ENCODE measurements at regions of chr10 and their contacts with region 1.

Region 1: GRCh38 chr10:48577158-48577557 is 27.7 kb downstream of the ARHGAP22 start:
- DNase-seq: no peak
- ATAC-seq: peak; percentile 65
- H3K4me3 Mint-ChIP-seq: peak overlapping the region; percentile 41
- H3K27ac Mint-ChIP-seq: peak overlapping the region; percentile 82
- H3K4me1 Mint-ChIP-seq: peaks cover 92% of the 10 kb centered on the region
- H3K27me3 Mint-ChIP-seq: no peaks in the 10 kb centered on the region
- CTCF ChIP-seq: no peak

Region 2: GRCh38 chr10:48634198-48634983 is 57.2 kb after region 1 on chr10:
- CTCF ChIA-PET with region 1: no interaction called
- POLR2A ChIA-PET with region 1: interaction called, 4 read pairs
- intact Hi-C with region 1: loop called (anchors 2 kb)
- DNase-seq: peak; percentile 67
- ATAC-seq: peak; percentile 100
- H3K4me3 Mint-ChIP-seq: peak overlapping the region; percentile 71
- H3K27ac Mint-ChIP-seq: peak overlapping the region; percentile 74
- H3K4me1 Mint-ChIP-seq: peaks cover 45% of the 10 kb centered on the region
- H3K27me3 Mint-ChIP-seq: peaks cover 17% of the 10 kb centered on the region
- CTCF ChIP-seq: no peak

Region 3: DNA sequence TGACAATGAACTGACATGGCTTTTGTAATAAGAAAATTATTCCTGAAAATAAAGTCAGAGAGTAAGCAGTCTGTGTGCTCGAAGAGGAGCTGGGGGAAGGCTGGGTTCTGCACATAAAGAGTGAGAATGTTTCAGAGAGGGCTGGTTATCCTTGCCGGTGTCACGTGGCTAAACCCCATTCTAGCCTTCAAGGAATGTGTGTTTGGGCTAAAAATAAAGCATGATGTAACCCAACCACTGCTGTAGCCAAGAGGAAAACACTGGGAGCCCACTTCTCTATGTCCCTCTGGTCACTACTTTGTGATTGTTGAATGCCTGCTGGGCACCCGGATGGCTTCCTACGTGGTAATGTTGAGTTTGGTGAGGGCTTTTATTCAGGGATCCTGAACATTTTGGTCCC is 131.0 kb after region 1 on chr10:
- CTCF ChIA-PET with region 1: no interaction called
- POLR2A ChIA-PET with region 1: no interaction called
- intact Hi-C with region 1: no loop called
- DNase-seq: no peak
- ATAC-seq: no peak
- H3K4me3 Mint-ChIP-seq: no peak overlapping the region
- H3K27ac Mint-ChIP-seq: peak overlapping the region; percentile 30
- H3K4me1 Mint-ChIP-seq: peaks cover 82% of the 10 kb centered on the region
- H3K27me3 Mint-ChIP-seq: no peaks in the 10 kb centered on the region
- CTCF ChIP-seq: no peak

Region 4: DNA sequence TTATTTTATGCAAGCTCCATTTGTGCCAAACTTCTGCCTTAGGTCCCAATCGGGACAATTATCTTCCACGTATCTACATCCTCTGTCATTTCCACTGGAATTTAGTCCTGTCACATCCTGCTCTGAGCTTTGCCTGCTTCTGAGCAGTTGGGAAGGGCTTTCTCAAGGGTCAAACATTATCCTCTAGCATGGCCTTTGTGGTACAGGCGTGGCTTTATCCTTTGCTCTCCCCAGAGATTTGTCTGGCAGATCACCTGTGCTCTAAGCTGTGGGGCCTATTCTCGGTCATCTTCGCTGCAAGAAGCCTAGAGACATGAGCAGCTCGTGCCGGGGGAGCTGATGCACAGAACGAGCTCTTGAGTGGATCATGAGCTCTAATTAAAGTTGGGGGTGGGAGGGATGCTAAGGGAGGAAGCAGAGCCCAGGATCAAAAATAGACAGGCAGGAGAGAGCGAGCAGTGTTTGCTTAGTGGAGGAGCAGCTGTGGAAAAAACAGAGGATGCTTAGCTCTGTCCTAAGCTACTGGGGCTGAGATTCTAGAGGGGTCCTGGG is 630.9 kb after region 1 on chr10:
- CTCF ChIA-PET with region 1: no interaction called
- POLR2A ChIA-PET with region 1: interaction called, 10 read pairs
- intact Hi-C with region 1: no loop called
- DNase-seq: no peak
- ATAC-seq: no peak
- H3K4me3 Mint-ChIP-seq: no peak overlapping the region
- H3K27ac Mint-ChIP-seq: no peak overlapping the region
- H3K4me1 Mint-ChIP-seq: peaks cover 9% of the 10 kb centered on the region
- H3K27me3 Mint-ChIP-seq: peaks cover 8% of the 10 kb centered on the region
- CTCF ChIP-seq: no peak

Measured in activated B cell treated with CpG ODN at 0.5 μM for 24 hours (primary cell).